Caco-2 (cell line): ENCODE measurements at regions of chr4 and their contacts with region 1.

Region 1: GRCh38 chr4:170089668-170090351 is at the start of gene AADAT:
- DNase-seq: peak; percentile 87 to 90
- H3K4me3 ChIP-seq: peak within 1 kb of the TSS; percentile 63
- H3K4me3 Mint-ChIP-seq: peak within 1 kb of the TSS; percentile 96
- H3K27ac Mint-ChIP-seq: peak within 1 kb of the TSS; percentile 82
- H3K4me1 ChIP-seq: no peaks in the 10 kb centered on the region
- H3K4me1 Mint-ChIP-seq: peaks cover 7% of the 10 kb centered on the region
- H3K27me3 ChIP-seq: no peaks in the 10 kb centered on the region
- H3K27me3 Mint-ChIP-seq: no peaks in the 10 kb centered on the region
- CTCF ChIP-seq: peak; percentile 69 to 83
- total RNA-seq, gene AADAT: 8.4 and 10.5 TPM in 2 replicates

Region 2: GRCh38 chr4:169791527-169792156 is 298.2 kb before region 1 on chr4:
- CTCF ChIA-PET with region 1: interaction called, 3 read pairs
- POLR2A ChIA-PET with region 1: no interaction called
- intact Hi-C with region 1: loop called (anchors 1 kb)
- DNase-seq: peak; percentile 58 to 60
- H3K4me3 ChIP-seq: no peak overlapping the region
- H3K4me3 Mint-ChIP-seq: peak overlapping the region; percentile 65
- H3K27ac Mint-ChIP-seq: no peak overlapping the region
- H3K4me1 ChIP-seq: no peaks in the 10 kb centered on the region
- H3K4me1 Mint-ChIP-seq: peaks cover 6% of the 10 kb centered on the region
- H3K27me3 ChIP-seq: no peaks in the 10 kb centered on the region
- H3K27me3 Mint-ChIP-seq: peaks cover 30% of the 10 kb centered on the region
- CTCF ChIP-seq: peak; percentile 49 to 55

Region 3: GRCh38 chr4:169810325-169811323 is 279.2 kb before region 1 on chr4:
- CTCF ChIA-PET with region 1: interaction called, 3 read pairs
- POLR2A ChIA-PET with region 1: no interaction called
- intact Hi-C with region 1: loop called (anchors 1 kb)
- DNase-seq: peak in 1 of 2 experiments; percentile 59
- H3K4me3 ChIP-seq: no peak overlapping the region
- H3K4me3 Mint-ChIP-seq: no peak overlapping the region
- H3K27ac Mint-ChIP-seq: no peak overlapping the region
- H3K4me1 ChIP-seq: no peaks in the 10 kb centered on the region
- H3K4me1 Mint-ChIP-seq: no peaks in the 10 kb centered on the region
- H3K27me3 ChIP-seq: no peaks in the 10 kb centered on the region
- H3K27me3 Mint-ChIP-seq: peaks cover 3% of the 10 kb centered on the region
- CTCF ChIP-seq: peak; percentile 57 to 70

Region 4: DNA sequence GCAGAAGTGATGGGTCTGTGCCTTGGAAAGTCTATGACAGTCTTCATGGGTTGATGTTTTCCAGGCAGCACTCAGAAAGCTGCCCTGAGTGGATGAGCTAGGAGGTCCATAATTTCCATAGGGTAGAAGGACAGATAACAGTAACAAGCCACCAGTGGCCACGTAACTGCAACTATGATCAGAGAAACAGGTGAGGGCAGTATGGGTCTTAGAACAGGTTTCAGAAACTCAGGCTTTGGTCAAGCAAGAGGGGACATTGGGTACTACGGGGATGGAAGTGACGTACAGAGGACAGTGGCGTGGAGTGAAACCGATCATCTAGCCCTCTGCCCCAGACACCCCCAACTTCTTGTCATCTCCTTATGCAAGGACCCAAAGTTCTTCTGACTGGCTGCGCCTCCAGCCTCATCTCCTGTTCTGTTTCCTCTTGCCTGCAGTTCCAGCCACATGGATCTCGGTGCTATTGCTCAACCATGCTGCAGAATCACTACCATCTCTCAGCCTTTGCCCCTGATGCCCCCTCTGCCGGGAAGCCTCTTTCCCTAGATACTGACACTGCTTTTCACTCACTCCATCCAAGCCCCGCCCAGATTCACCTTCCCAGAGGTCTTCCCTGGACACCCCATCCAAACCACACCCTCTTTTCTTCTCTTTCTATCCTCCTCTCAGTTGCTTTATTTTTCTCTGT is 187.0 kb before region 1 on chr4:
- CTCF ChIA-PET with region 1: no interaction called
- POLR2A ChIA-PET with region 1: no interaction called
- intact Hi-C with region 1: loop called (anchors 1 kb)
- DNase-seq: peak in 1 of 2 experiments; percentile 22
- H3K4me3 ChIP-seq: no peak overlapping the region
- H3K4me3 Mint-ChIP-seq: no peak overlapping the region
- H3K27ac Mint-ChIP-seq: no peak overlapping the region
- H3K4me1 ChIP-seq: no peaks in the 10 kb centered on the region
- H3K4me1 Mint-ChIP-seq: no peaks in the 10 kb centered on the region
- H3K27me3 ChIP-seq: no peaks in the 10 kb centered on the region
- H3K27me3 Mint-ChIP-seq: peaks cover 11% of the 10 kb centered on the region
- CTCF ChIP-seq: peak in 1 of 2 experiments; percentile 8

Region 5: GRCh38 chr4:170027181-170027829 is 62.5 kb before region 1 on chr4:
- CTCF ChIA-PET with region 1: no interaction called
- POLR2A ChIA-PET with region 1: no interaction called
- intact Hi-C with region 1: loop called (anchors 1 kb)
- DNase-seq: peak; percentile 93 to 94
- H3K4me3 ChIP-seq: peak overlapping the region; percentile 78
- H3K4me3 Mint-ChIP-seq: peak overlapping the region; percentile 84
- H3K27ac Mint-ChIP-seq: peak overlapping the region; percentile 51
- H3K4me1 ChIP-seq: no peaks in the 10 kb centered on the region; the same call in 1 of the 2 replicates
- H3K4me1 Mint-ChIP-seq: no peaks in the 10 kb centered on the region
- H3K27me3 ChIP-seq: peaks cover 4% of the 10 kb centered on the region
- H3K27me3 Mint-ChIP-seq: peaks cover 17% of the 10 kb centered on the region
- CTCF ChIP-seq: no peak

Region 6: GRCh38 chr4:170047771-170048354 is 41.9 kb before region 1 on chr4:
- CTCF ChIA-PET with region 1: no interaction called
- POLR2A ChIA-PET with region 1: interaction called, 4 read pairs
- intact Hi-C with region 1: loop called (anchors 1 kb)
- DNase-seq: peak in 1 of 2 experiments; percentile 39
- H3K4me3 ChIP-seq: no peak overlapping the region
- H3K4me3 Mint-ChIP-seq: no peak overlapping the region
- H3K27ac Mint-ChIP-seq: no peak overlapping the region
- H3K4me1 ChIP-seq: no peaks in the 10 kb centered on the region
- H3K4me1 Mint-ChIP-seq: no peaks in the 10 kb centered on the region
- H3K27me3 ChIP-seq: no peaks in the 10 kb centered on the region
- H3K27me3 Mint-ChIP-seq: peaks cover 4% of the 10 kb centered on the region
- CTCF ChIP-seq: peak; percentile 50 to 53

Region 7: GRCh38 chr4:170102426-170102825 is 12.6 kb after region 1 on chr4:
- CTCF ChIA-PET with region 1: no interaction called
- POLR2A ChIA-PET with region 1: no interaction called
- intact Hi-C with region 1: loop called (anchors 1 kb)
- DNase-seq: peak; percentile 71 to 79
- H3K4me3 ChIP-seq: no peak overlapping the region
- H3K4me3 Mint-ChIP-seq: peak overlapping the region; percentile 19
- H3K27ac Mint-ChIP-seq: peak overlapping the region; percentile 87
- H3K4me1 ChIP-seq: peaks cover 15% of the 10 kb centered on the region
- H3K4me1 Mint-ChIP-seq: peaks cover 25% of the 10 kb centered on the region
- H3K27me3 ChIP-seq: no peaks in the 10 kb centered on the region
- H3K27me3 Mint-ChIP-seq: no peaks in the 10 kb centered on the region
- CTCF ChIP-seq: no peak

Region 8: GRCh38 chr4:170138580-170139194 is 48.9 kb after region 1 on chr4:
- CTCF ChIA-PET with region 1: no interaction called
- POLR2A ChIA-PET with region 1: no interaction called
- intact Hi-C with region 1: no loop called
- DNase-seq: peak; percentile 69 to 74
- H3K4me3 ChIP-seq: no peak overlapping the region
- H3K4me3 Mint-ChIP-seq: no peak overlapping the region
- H3K27ac Mint-ChIP-seq: no peak overlapping the region
- H3K4me1 ChIP-seq: no peaks in the 10 kb centered on the region
- H3K4me1 Mint-ChIP-seq: peaks cover 6% of the 10 kb centered on the region
- H3K27me3 ChIP-seq: no peaks in the 10 kb centered on the region
- H3K27me3 Mint-ChIP-seq: peaks cover 6% of the 10 kb centered on the region
- CTCF ChIP-seq: peak; percentile 68 to 75

Region 9: DNA sequence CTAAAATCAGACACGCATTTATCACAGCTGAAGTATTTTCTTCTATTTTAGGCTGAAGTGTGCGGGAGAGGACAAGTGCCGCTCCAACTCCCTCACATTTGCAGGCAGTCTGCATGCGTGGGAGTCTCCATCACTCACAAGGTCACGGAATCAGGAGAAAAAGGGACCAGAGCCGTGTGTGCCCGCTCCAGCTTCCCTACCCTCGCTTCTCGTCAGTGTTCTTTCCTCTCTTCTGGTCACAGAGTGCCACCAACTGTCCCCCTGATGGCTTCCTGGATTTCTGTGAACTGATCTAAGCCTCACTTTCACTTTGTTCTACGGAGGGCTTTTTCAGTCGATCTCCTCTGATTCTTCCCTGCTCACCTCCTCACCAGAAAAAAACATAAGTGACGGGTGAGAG is 407.3 kb after region 1 on chr4:
- CTCF ChIA-PET with region 1: no interaction called
- POLR2A ChIA-PET with region 1: no interaction called
- intact Hi-C with region 1: no loop called
- DNase-seq: no peak
- H3K4me3 ChIP-seq: no peak overlapping the region
- H3K4me3 Mint-ChIP-seq: peak overlapping the region; percentile 41
- H3K27ac Mint-ChIP-seq: no peak overlapping the region
- H3K4me1 ChIP-seq: no peaks in the 10 kb centered on the region
- H3K4me1 Mint-ChIP-seq: no peaks in the 10 kb centered on the region
- H3K27me3 ChIP-seq: no peaks in the 10 kb centered on the region
- H3K27me3 Mint-ChIP-seq: peaks cover 3% of the 10 kb centered on the region
- CTCF ChIP-seq: no peak

Region 10: DNA sequence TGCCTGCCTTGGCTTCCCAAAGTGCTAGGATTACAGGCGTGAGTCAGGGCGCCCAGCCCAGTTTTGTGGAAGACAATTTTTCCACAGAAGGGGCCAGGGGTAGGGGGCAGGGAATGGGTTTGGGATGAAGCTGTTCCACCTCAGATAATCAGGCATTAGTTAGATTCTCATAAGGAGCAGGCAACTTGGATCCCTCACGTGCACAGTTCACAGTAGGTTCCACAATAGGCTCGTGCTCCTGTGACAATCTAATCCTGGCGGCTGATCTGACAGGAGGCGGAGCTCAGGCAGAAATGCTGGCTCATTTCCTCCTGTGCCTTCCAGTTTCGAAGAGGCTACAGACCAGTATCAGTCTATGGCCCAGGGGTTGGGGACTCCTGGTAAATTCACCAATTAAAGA is 491.5 kb after region 1 on chr4:
- CTCF ChIA-PET with region 1: no interaction called
- POLR2A ChIA-PET with region 1: no interaction called
- intact Hi-C with region 1: no loop called
- DNase-seq: no peak
- H3K4me3 ChIP-seq: no peak overlapping the region
- H3K4me3 Mint-ChIP-seq: no peak overlapping the region
- H3K27ac Mint-ChIP-seq: no peak overlapping the region
- H3K4me1 ChIP-seq: no peaks in the 10 kb centered on the region
- H3K4me1 Mint-ChIP-seq: no peaks in the 10 kb centered on the region
- H3K27me3 ChIP-seq: no peaks in the 10 kb centered on the region
- H3K27me3 Mint-ChIP-seq: peaks cover 2% of the 10 kb centered on the region
- CTCF ChIP-seq: no peak

Region 11: DNA sequence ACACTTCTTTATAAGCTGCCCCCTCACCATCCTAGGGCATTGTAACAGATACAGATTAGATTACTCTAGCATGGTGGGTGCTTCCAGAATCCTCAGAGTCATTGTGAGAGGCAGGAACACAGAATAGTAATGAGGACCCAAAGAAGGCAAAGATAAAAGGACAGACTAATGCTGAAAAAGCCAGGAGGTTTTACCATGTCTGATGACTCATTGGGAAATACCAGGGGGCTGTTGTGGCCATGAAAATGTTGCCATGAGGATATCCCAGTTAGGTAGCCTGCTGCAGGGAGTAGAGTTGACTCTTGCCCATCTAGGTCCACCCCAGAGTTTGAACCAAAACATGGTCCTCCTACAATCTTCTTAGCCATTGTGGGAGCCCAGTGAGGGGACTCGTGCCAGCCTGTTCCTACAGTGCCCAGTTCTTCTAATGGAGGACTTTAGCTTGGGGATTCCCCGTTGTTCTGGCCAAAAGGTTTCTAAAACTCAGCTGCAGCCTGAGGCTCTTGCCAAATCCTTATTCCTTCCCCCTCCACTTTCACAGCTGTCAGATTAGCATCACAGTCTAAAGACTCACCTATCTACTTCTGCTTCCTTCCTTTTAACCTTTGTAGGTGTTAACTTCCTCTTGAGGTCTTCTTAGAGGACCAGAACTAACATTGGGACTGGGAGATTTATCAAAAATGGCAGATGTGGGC is 585.9 kb after region 1 on chr4:
- CTCF ChIA-PET with region 1: no interaction called
- POLR2A ChIA-PET with region 1: no interaction called
- intact Hi-C with region 1: no loop called
- DNase-seq: no peak
- H3K4me3 ChIP-seq: no peak overlapping the region
- H3K4me3 Mint-ChIP-seq: no peak overlapping the region
- H3K27ac Mint-ChIP-seq: no peak overlapping the region
- H3K4me1 ChIP-seq: no peaks in the 10 kb centered on the region
- H3K4me1 Mint-ChIP-seq: no peaks in the 10 kb centered on the region
- H3K27me3 ChIP-seq: no peaks in the 10 kb centered on the region
- H3K27me3 Mint-ChIP-seq: peaks cover 11% of the 10 kb centered on the region
- CTCF ChIP-seq: no peak